Activated CD8-positive, alpha-beta T cell treated with anti-CD3 and anti-CD28 coated beads for 36 hours (primary cell): ENCODE measurements at regions of chr15 and their contacts with region 1.

Region 1: GRCh38 chr15:25790000-25790660 is 73.0 kb downstream of the ATP10A start:
- DNase-seq: peak; percentile 80
- ATAC-seq: peak; percentile 97
- H3K4me3 Mint-ChIP-seq: no peak overlapping the region
- H3K27ac Mint-ChIP-seq: peak overlapping the region; percentile 33
- H3K4me1 Mint-ChIP-seq: peaks cover 54% of the 10 kb centered on the region
- H3K27me3 Mint-ChIP-seq: no peaks in the 10 kb centered on the region
- CTCF ChIP-seq: no peak

Region 2: DNA sequence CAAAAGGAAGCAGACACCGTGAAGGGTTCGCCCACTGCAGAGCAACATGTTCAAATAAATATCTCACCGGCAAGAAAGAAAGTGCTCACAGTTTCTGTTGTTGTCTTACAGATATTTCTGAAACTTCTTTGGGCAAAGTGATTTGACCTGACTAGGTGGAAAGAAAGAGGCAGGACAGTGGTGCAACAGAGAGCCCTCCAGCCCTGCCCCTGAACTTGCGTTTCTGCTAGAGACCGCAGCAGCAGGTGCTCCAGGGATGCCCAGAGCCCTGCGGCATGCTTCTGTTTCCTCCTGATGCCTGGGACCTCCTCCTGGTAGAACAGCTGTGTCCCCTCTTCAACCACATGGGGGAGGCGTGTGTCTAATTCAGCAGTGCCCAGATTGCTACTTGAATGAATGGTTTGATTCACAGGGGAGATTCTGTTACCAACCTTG is 50.4 kb before region 1 on chr15:
- CTCF ChIA-PET with region 1: no interaction called
- POLR2A ChIA-PET with region 1: no interaction called
- intact Hi-C with region 1: loop called (anchors 5 kb)
- DNase-seq: peak; percentile 61
- ATAC-seq: peak; percentile 87
- H3K4me3 Mint-ChIP-seq: no peak overlapping the region
- H3K27ac Mint-ChIP-seq: no peak overlapping the region
- H3K4me1 Mint-ChIP-seq: peaks cover 15% of the 10 kb centered on the region
- H3K27me3 Mint-ChIP-seq: no peaks in the 10 kb centered on the region
- CTCF ChIP-seq: peak; percentile 26

Region 3: DNA sequence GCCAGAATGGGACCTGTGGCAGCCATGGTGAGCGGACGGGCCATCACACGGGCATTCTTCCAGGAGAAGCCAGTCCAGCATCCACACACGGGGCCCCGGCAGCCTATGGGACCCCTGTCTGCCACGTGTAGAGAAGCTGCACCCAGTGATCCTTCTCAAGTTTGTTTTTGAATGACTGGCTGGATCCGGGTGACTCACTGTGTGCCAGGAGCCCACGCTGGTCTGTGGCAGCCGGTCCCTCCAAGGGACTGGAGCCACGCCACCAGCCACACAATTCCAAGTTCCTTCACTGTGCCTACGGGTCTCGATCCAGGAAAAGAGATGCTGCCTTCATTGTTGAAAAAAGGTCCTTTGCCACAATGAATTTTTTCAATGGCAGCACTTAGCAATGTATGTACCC is 14.9 kb after region 1 on chr15:
- CTCF ChIA-PET with region 1: no interaction called
- POLR2A ChIA-PET with region 1: no interaction called
- intact Hi-C with region 1: no loop called
- DNase-seq: no peak
- ATAC-seq: no peak
- H3K4me3 Mint-ChIP-seq: no peak overlapping the region
- H3K27ac Mint-ChIP-seq: no peak overlapping the region
- H3K4me1 Mint-ChIP-seq: peaks cover 23% of the 10 kb centered on the region
- H3K27me3 Mint-ChIP-seq: no peaks in the 10 kb centered on the region
- CTCF ChIP-seq: no peak

Region 4: DNA sequence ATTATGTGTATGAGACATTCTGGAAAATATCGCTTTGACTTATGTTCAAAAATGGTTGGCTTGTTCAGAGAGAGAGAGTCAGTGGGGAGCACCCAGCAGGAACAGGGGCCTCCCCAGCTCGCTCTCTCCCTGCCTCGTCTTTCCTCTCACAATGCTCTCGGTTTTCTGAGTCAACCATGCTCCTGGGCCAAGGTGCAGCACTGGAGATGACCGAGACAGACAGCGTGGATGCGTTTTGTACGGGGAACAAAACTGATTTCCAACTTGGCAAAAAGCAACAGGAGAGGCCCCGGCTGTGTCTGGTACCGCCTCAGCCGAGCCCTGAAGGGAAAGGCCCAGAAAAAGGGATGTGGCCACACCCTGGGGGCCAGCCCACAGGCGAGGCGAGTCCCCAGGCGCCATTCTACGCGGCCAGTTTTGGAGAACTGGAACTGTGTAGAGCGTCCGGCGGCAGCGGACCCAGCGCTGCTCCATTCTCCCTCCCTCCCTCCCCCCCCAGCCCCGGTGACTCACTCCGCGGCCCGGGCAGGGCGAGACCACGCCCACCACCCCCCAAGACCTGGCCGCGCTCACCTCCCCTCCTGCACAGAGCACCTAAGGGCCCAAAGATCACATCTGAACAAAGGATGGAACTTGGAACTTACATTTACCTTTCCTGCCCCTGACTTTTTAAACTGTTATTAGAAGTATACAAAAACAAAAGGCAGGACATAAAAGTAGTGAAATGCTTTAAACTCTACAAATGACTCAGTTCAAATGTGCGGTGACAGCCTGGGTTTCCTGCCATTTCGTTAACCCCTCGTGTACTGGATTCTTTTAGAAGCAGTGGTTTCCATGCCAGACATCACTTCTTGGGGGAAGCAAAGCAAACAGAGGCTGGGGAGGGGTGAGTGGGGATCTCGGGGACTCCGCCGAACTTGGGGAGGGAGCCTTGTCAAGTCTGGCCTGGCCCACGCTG is 60.3 kb after region 1 on chr15:
- CTCF ChIA-PET with region 1: no interaction called
- POLR2A ChIA-PET with region 1: interaction called, 3 read pairs
- intact Hi-C with region 1: loop called (anchors 2 kb)
- DNase-seq: peak; percentile 80
- ATAC-seq: peak; percentile 72
- H3K4me3 Mint-ChIP-seq: peak overlapping the region; percentile 75
- H3K27ac Mint-ChIP-seq: peak overlapping the region; percentile 100
- H3K4me1 Mint-ChIP-seq: peaks cover 80% of the 10 kb centered on the region
- H3K27me3 Mint-ChIP-seq: no peaks in the 10 kb centered on the region
- CTCF ChIP-seq: no peak